ENCODE measurements at regions of chr20 and their contacts with region 1.

Region 1: DNA sequence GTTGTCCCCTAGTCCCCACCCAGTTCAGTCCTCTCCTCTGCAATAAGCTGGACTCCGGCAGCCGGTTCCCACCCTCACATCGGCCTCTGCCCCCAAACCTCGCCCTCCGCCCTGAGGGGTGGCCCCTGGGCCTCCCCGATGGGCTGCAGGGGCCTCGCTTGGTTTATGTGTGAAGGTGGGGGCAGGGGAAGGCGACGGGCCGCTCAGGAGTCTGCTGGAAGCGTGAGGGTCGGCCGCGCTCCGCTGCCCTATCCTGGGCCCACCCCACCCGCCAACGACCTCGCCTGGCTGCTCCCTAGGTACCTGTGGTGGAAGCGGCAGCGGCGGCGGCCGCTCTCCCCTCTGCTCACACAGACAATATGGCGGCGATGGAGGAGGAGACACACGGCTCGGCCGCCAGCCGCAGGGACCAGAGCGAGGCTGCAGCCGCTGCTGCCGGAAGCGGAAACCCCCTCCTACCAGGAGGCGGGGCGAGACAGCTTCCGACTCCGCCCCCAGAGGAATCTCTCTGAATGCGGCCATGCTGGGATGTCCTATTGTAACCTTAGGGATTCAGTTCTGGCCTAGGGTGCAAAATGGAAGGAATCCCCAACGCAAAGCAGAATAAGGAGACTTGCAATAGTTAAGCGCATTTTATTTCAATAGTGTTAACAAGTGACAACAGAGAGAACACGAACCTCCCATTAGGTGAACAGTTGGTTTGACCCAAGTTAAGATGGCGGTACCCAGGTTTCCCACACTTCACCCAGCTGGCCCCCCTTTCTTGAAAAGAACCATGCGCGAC is at the start of gene CSNK2A1:
- DNase-seq: peak; percentile 97
- H3K4me3 ChIP-seq: peak within 1 kb of the TSS; percentile 96 to 99 (median 98)
- H3K27ac ChIP-seq: peak within 1 kb of the TSS; percentile 84 to 94 (median 92)
- H3K4me1 ChIP-seq: peaks cover 0 to 33% (median 19%) of the 10 kb centered on the region in 4 donors
- H3K27me3 ChIP-seq: no peaks in the 10 kb centered on the region
- CTCF ChIP-seq: no peak
- EP300 ChIP-seq: no peak
- POLR2A ChIP-seq: peak; percentile 54 to 86
- total RNA-seq, gene CSNK2A1: 51.5 to 77.1 (median 65.9) TPM

Region 2: DNA sequence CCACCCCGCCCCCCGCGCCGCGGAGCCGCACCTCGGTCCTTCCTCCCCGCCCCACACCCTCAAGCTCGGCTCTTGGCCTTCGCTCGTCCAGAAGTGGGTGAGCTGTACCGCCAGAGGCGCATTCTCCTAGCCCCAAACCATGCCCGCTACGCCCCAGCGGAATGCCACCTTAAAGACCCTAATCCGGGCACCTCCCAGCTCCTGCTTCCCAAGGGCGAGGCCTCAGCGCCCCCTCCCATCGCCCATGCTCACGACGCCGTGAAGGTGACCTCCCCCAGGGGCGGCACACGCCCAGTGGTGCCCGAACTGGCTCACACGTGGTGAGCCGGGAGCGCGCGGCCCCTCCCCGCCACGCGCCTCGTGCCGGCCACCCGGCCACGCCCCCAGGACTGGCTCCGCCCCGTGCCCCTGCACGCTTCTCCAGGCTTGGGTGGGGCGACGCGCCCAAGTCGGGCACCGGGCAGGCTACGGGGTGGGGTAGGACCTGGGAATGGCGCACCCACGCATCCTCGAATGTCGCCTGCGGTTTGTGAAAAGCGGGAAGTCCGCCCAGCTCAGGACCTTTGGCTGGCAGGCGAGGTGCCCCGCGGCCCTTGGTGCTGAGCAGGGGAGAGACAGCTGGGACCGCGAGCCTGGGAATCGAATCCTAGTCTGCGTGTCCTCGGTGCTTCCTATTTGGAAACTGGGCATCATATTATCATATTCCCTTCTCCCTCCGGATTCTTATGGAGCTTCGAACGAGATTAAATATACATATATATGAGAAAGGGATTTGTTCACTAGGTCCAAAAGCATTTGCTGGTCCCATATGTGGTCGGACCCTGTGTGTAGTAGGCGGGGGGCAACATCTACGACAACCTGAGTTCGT is 219.2 kb before region 1 on chr20:
- intact Hi-C with region 1: no loop called
- DNase-seq: peak; percentile 94
- H3K4me3 ChIP-seq: peak overlapping the region; percentile 62 to 81 (median 64)
- H3K27ac ChIP-seq: peak overlapping the region; percentile 90 to 97 (median 96)
- H3K4me1 ChIP-seq: peaks cover 0 to 42% (median 30%) of the 10 kb centered on the region in 4 donors
- H3K27me3 ChIP-seq: no peaks in the 10 kb centered on the region
- CTCF ChIP-seq: peak in 3 of 4 experiments; percentile 15 to 25 (median 24)
- EP300 ChIP-seq: no peak
- POLR2A ChIP-seq: peak; percentile 52 to 53

Region 3: DNA sequence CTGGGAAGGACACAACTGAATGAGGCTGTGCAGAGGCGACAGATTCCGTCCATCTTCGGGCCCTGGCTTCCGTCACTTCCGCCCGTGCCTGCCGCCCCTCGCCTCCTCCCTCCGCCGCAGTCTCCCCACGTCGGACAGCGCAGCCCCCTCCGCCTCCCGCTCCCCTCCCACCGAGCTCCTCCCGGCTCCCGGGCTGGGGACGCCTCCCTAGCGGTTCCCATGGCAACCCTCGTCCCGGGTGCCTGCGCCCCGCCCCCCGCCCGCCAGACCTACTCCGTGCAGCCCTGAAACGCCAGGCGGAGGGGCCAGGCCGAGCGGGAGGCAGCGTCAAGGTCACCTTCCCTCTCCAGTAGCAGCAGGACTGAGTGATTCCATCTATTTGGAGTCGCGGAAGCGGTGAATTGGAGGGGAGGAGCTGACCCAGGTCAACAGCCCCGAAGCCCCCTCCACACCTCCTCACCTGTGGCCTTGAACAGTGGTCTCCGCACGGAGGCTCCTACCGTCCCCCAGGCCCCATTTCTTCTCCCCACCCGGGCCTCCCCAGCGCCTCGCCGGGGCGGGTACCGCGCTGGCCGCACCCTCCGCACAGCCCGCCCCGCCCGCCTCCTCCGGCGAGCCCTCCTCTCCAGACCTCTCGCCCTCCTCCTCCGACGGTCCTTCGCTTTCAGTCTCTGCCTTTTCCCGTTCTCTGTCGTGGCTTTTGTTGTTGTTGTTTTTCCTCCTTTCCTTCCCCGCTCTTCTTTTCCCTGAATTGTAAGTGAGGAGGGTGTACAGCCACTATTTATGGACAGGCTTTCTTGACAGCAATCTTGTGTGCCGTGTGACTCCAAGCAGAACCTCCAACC is 195.7 kb before region 1 on chr20:
- intact Hi-C with region 1: loop called (anchors 5 kb)
- DNase-seq: peak; percentile 98
- H3K4me3 ChIP-seq: peak overlapping the region; percentile 72 to 82 (median 79)
- H3K27ac ChIP-seq: peak overlapping the region; percentile 94 to 98 (median 96)
- H3K4me1 ChIP-seq: peaks cover 0 to 28% (median 19%) of the 10 kb centered on the region in 4 donors
- H3K27me3 ChIP-seq: no peaks in the 10 kb centered on the region
- CTCF ChIP-seq: no peak
- EP300 ChIP-seq: peak in 1 of 4 donors; percentile 46
- POLR2A ChIP-seq: peak; percentile 48

Region 4: GRCh38 chr20:407133-407952 is 136.2 kb before region 1 on chr20:
- intact Hi-C with region 1: loop called (anchors 2 kb)
- DNase-seq: peak; percentile 89
- H3K4me3 ChIP-seq: peak overlapping the region; percentile 32 to 99 (median 80)
- H3K27ac ChIP-seq: peak overlapping the region; percentile 88 to 96 (median 94)
- H3K4me1 ChIP-seq: peaks cover 0 to 33% (median 24%) of the 10 kb centered on the region in 4 donors
- H3K27me3 ChIP-seq: no peaks in the 10 kb centered on the region
- CTCF ChIP-seq: peak in 3 of 4 experiments; percentile 18 to 32 (median 19)
- EP300 ChIP-seq: no peak
- POLR2A ChIP-seq: no peak

Region 5: DNA sequence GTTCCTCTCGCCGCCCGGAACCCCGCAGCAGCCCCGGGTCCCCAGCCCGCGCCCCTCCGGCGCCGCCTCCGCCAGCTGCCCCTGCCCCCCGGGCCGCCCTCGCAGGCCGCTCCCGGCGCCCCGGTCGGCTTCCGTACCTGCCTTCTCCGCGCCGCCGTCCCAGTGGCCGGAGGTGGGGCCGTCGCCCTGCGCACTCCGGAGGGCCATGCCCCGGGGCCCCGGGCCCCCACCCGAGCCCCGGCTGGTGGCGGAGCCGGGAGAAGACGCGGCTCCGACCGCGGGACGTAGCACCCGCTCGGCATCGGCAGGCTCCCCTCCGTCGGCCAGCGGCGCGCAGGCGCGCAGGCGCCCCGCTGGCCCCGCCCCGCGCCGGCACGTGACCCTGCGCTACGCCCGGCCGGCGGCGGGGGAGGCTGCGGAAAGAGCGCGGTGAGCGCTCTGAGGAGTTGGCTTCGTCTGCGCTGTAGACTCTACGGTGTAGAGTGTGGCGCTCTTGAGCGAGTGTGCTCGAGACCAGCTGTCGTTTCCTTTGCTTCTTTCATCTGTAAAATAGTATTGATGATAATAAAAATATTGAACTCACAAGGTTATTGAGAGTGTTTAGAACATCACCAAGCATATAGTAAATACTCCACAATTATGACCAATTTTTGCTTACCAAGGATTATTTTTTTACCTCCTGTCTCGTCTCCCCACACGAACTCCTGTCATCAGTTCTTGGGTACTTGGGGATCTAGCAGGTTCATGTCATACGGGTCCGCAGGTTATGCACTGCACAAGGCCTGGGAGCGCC is 81.2 kb before region 1 on chr20 and contains the start of gene TBC1D20:
- intact Hi-C with region 1: loop called (anchors 5 kb)
- DNase-seq: peak; percentile 92
- H3K4me3 ChIP-seq: peak within 1 kb of the TSS; percentile 67 to 90 (median 86)
- H3K27ac ChIP-seq: peak within 1 kb of the TSS; percentile 92 to 97 (median 96)
- H3K4me1 ChIP-seq: peaks cover 0 to 40% (median 37%) of the 10 kb centered on the region in 4 donors
- H3K27me3 ChIP-seq: no peaks in the 10 kb centered on the region
- CTCF ChIP-seq: no peak
- EP300 ChIP-seq: no peak
- POLR2A ChIP-seq: no peak
- total RNA-seq, gene TBC1D20: 32.6 to 42.9 (median 35.3) TPM

Region 6: GRCh38 chr20:653110-653589 is 109.6 kb after region 1 on chr20 and contains the start of gene SRXN1:
- intact Hi-C with region 1: loop called (anchors 5 kb)
- DNase-seq: peak; percentile 94
- H3K4me3 ChIP-seq: peak within 1 kb of the TSS; percentile 68 to 86 (median 76)
- H3K27ac ChIP-seq: peak within 1 kb of the TSS; percentile 84 to 90 (median 87)
- H3K4me1 ChIP-seq: peaks cover 0 to 22% (median 19%) of the 10 kb centered on the region in 4 donors
- H3K27me3 ChIP-seq: no peaks in the 10 kb centered on the region
- CTCF ChIP-seq: peak in 1 of 4 experiments; percentile 30
- EP300 ChIP-seq: no peak
- POLR2A ChIP-seq: no peak
- total RNA-seq, gene SRXN1: 16.8 to 32.4 (median 27.1) TPM

Region 7: DNA sequence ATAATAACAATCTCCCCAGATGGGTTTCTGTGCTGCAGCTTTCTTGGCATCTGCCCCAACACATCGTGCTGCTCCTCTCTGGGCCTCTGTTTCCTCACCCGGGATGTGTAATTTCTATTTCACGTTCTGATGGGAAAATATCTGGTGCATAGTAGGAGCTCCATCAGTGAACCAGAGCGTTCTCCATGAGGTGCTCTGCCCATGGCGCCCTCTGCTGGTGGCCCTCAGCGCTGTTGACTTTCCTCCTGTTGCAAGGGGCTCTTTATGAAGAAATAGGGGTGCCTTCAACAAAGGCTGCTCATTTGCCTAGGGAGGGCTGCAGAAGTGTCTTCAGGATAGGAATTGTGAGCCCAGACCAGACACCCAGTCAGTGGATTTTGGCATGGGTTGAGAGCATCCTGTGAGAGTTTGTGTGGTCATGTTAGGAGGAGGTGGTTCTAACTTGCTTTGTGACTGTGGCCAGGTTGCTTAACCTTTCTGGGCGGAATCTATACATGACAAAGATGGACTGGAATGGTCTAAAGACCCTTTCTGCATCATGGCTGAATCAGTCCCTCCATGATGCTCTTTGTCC is 123.9 kb after region 1 on chr20:
- intact Hi-C with region 1: no loop called
- DNase-seq: no peak
- H3K4me3 ChIP-seq: no peak overlapping the region
- H3K27ac ChIP-seq: no peak overlapping the region
- H3K4me1 ChIP-seq: peaks cover 0 to 4% (median 0%) of the 10 kb centered on the region in 4 donors
- H3K27me3 ChIP-seq: peaks cover 21 to 80% (median 52%) of the 10 kb centered on the region in 3 donors
- CTCF ChIP-seq: peak; percentile 13 to 69 (median 47)
- EP300 ChIP-seq: no peak
- POLR2A ChIP-seq: no peak

Region 8: GRCh38 chr20:1466211-1467081 is 922.9 kb after region 1 on chr20 and contains the start of gene NSFL1C:
- intact Hi-C with region 1: loop called (anchors 5 kb)
- DNase-seq: peak; percentile 96
- H3K4me3 ChIP-seq: peak within 1 kb of the TSS; percentile 77 to 97 (median 92)
- H3K27ac ChIP-seq: peak within 1 kb of the TSS; percentile 84 to 89 (median 87)
- H3K4me1 ChIP-seq: peaks cover 0 to 45% (median 35%) of the 10 kb centered on the region in 4 donors
- H3K27me3 ChIP-seq: no peaks in the 10 kb centered on the region
- CTCF ChIP-seq: peak; percentile 49 to 98 (median 66)
- EP300 ChIP-seq: no peak
- POLR2A ChIP-seq: peak; percentile 32 to 35
- total RNA-seq, gene NSFL1C: 33.5 to 46.5 (median 40.5) TPM